ENCODE measurements at regions of chr20 and their contacts with region 1.

Region 1: GRCh38 chr20:8131598-8132483 is at the start of gene PLCB1:
- DNase-seq: peak; percentile 91
- H3K4me3 ChIP-seq: peak within 1 kb of the TSS; percentile 76
- H3K27ac ChIP-seq: peak within 1 kb of the TSS; percentile 45
- H3K4me1 ChIP-seq: peaks cover 29% of the 10 kb centered on the region
- CTCF ChIP-seq: peak; percentile 78
- total RNA-seq, gene PLCB1: 25.0 and 30.5 TPM in 2 replicates

Region 2: GRCh38 chr20:7935027-7935551 is 196.8 kb before region 1 on chr20:
- CTCF ChIA-PET with region 1: interaction called, 5 read pairs
- POLR2A ChIA-PET with region 1: no interaction called
- intact Hi-C with region 1: loop called (anchors 5 kb)
- DNase-seq: peak; percentile 66
- H3K4me3 ChIP-seq: peak overlapping the region; percentile 26
- H3K27ac ChIP-seq: peak overlapping the region; percentile 24
- H3K4me1 ChIP-seq: peaks cover 31% of the 10 kb centered on the region
- CTCF ChIP-seq: no peak

Region 3: GRCh38 chr20:8389381-8390036 is 257.7 kb after region 1 on chr20:
- CTCF ChIA-PET with region 1: no interaction called
- POLR2A ChIA-PET with region 1: interaction called, 4 read pairs
- intact Hi-C with region 1: loop called (anchors 2 kb)
- DNase-seq: peak; percentile 75
- H3K4me3 ChIP-seq: no peak overlapping the region
- H3K27ac ChIP-seq: peak overlapping the region; percentile 9
- H3K4me1 ChIP-seq: peaks cover 87% of the 10 kb centered on the region
- CTCF ChIP-seq: peak; percentile 86

Region 4: GRCh38 chr20:8527998-8528723 is 396.3 kb after region 1 on chr20:
- CTCF ChIA-PET with region 1: no interaction called
- POLR2A ChIA-PET with region 1: no interaction called
- intact Hi-C with region 1: loop called (anchors 5 kb)
- DNase-seq: peak; percentile 59
- H3K4me3 ChIP-seq: no peak overlapping the region
- H3K27ac ChIP-seq: peak overlapping the region; percentile 30
- H3K4me1 ChIP-seq: peaks cover 75% of the 10 kb centered on the region
- CTCF ChIP-seq: no peak

Region 5: GRCh38 chr20:8722276-8722928 is 590.6 kb after region 1 on chr20:
- CTCF ChIA-PET with region 1: interaction called, 3 read pairs
- POLR2A ChIA-PET with region 1: interaction called, 3 read pairs
- intact Hi-C with region 1: loop called (anchors 1 kb)
- DNase-seq: peak; percentile 76
- H3K4me3 ChIP-seq: no peak overlapping the region
- H3K27ac ChIP-seq: no peak overlapping the region
- H3K4me1 ChIP-seq: peaks cover 7% of the 10 kb centered on the region
- CTCF ChIP-seq: peak; percentile 96

Measured in OCI-LY7 (cell line).